Mammary epithelial cell (primary cell): ENCODE measurements at regions of chr10 and their contacts with region 1.

Region 1: GRCh38 chr10:70549962-70550458 is 52.5 kb downstream of the PRF1 start:
- DNase-seq: peak; percentile 39
- H3K4me3 ChIP-seq: no peak overlapping the region
- H3K27ac ChIP-seq: no peak overlapping the region
- H3K4me1 ChIP-seq: no peaks in the 10 kb centered on the region
- H3K27me3 ChIP-seq: peaks cover 2% of the 10 kb centered on the region
- CTCF ChIP-seq: peak; percentile 82 to 94

Region 2: DNA sequence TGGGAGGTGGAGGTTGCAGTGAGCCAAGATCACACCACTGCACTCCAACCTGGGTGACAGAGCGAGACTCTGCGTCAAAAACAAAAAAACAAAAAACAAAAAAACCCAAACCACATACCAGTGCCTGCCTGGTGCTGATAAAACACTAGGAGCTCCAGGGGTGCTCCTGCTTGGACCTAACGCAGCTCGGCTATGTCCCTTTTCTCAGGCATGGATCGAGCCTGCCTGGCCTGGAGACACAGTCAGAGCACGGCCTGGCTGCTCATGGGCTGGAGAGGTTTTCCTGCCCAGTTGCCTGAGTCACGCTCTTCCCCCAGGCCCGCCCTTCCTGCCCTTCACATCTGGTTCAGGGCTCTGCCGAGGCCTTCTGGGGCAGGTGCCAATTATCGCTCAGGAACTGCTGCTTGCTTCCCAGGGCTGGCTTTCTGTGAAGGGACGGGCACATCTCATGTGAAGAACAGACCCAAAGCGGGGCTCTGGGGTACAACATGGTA is 253.6 kb before region 1 on chr10:
- CTCF ChIA-PET with region 1: no interaction called
- dilution Hi-C with region 1: loop called (anchors 10 kb)
- in situ Hi-C with region 1: no loop called
- intact Hi-C with region 1: no loop called
- DNase-seq: peak; percentile 73
- H3K4me3 ChIP-seq: no peak overlapping the region
- H3K27ac ChIP-seq: no peak overlapping the region
- H3K4me1 ChIP-seq: peaks cover 15% of the 10 kb centered on the region
- H3K27me3 ChIP-seq: no peaks in the 10 kb centered on the region
- CTCF ChIP-seq: no peak

Region 3: DNA sequence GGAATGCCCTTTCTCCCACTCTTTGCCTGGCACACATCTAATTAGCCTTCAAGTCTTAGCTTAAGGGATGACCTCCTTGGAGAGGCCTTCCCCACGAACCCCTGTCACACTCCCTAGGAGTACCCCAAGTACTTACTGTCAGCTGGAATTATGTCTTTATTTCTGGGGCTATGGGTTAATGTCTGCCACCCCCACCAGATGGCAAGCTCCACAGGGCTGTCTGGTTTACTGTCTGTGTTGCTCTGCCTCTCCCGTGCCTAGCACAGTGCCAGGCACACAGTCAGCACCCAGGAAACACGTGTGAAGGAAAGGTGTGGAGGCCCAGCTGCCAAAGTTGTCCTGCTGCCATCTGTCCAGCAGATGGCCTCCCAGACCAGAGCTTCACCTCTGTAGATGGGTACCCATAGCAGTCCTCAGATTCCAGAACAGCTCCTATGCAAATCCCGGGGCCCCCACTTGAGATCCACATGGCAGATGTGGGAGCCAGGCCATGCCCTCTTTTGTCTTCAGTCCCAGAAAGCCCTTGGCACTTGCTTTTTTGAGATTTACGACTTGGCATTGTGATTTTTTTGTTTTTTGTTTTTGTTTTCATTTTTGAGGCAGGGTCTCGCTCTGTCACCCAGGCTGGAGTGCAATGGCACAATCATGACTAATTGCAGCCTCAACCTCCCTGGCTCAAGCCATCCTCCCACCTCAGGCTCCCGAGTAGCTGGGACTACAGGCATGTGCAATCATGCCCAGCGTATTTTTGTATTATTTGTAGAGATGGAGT is 88.6 kb before region 1 on chr10:
- CTCF ChIA-PET with region 1: no interaction called
- dilution Hi-C with region 1: loop called (anchors 10 kb)
- in situ Hi-C with region 1: no loop called
- intact Hi-C with region 1: no loop called
- DNase-seq: peak; percentile 48
- H3K4me3 ChIP-seq: no peak overlapping the region
- H3K27ac ChIP-seq: no peak overlapping the region
- H3K4me1 ChIP-seq: peaks cover 19% of the 10 kb centered on the region
- H3K27me3 ChIP-seq: peaks cover 3% of the 10 kb centered on the region
- CTCF ChIP-seq: peak; percentile 86 to 88

Region 4: GRCh38 chr10:70656489-70656888 is 106.5 kb after region 1 on chr10:
- CTCF ChIA-PET with region 1: interaction called, 3 read pairs
- dilution Hi-C with region 1: loop called (anchors 5 kb)
- in situ Hi-C with region 1: no loop called
- intact Hi-C with region 1: loop called (anchors 5 kb)
- DNase-seq: peak; percentile 99
- H3K4me3 ChIP-seq: no peak overlapping the region
- H3K27ac ChIP-seq: peak overlapping the region; percentile 82
- H3K4me1 ChIP-seq: peaks cover 39% of the 10 kb centered on the region
- H3K27me3 ChIP-seq: no peaks in the 10 kb centered on the region
- CTCF ChIP-seq: no peak

Region 5: GRCh38 chr10:70815504-70816219 is 265.7 kb after region 1 on chr10 and contains the start of gene SGPL1:
- CTCF ChIA-PET with region 1: no interaction called
- dilution Hi-C with region 1: no loop called
- in situ Hi-C with region 1: no loop called
- intact Hi-C with region 1: loop called (anchors 2 kb)
- DNase-seq: peak; percentile 81
- H3K4me3 ChIP-seq: peak within 1 kb of the TSS; percentile 63 to 71 (median 66)
- H3K27ac ChIP-seq: peak within 1 kb of the TSS; percentile 69
- H3K4me1 ChIP-seq: no peaks in the 10 kb centered on the region
- H3K27me3 ChIP-seq: no peaks in the 10 kb centered on the region
- CTCF ChIP-seq: peak; percentile 86 to 90
- total RNA-seq, gene SGPL1: 65.0 to 97.4 TPM

Region 6: DNA sequence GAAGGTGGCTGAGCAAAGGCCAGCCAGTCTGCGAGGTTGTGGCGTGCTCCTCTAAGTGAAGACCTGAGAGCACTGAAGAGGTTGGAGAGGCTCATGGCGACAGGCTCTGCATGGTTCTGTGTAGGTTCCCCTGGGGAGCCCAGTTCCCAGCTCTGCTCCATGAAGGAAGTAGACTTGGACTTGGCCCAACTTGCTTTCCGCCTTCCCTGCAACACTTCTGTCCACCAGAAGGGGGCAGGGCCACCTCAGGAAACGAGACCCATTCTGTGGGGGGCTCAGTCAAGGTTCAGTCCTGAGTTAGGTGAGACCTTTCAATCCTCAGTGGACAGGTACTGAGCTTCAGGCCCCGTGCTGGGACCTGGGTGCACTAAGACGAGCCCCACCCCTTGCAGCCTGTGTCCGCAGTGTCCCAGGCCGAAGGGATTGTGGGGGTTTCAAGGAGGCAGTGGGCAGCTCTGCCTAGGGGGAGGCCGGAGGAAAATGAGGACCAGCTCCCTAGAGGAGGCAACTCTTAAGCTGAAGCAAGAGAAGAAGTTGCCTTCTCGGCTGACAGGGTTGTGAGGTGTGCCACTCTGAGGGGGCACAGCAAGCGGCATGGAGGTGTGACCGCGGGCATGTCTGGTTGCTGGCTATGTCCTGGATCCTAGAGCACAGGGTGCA is 353.4 kb after region 1 on chr10:
- CTCF ChIA-PET with region 1: no interaction called
- dilution Hi-C with region 1: loop called (anchors 10 kb)
- in situ Hi-C with region 1: no loop called
- intact Hi-C with region 1: no loop called
- DNase-seq: peak; percentile 17
- H3K4me3 ChIP-seq: no peak overlapping the region
- H3K27ac ChIP-seq: no peak overlapping the region
- H3K4me1 ChIP-seq: no peaks in the 10 kb centered on the region
- H3K27me3 ChIP-seq: no peaks in the 10 kb centered on the region
- CTCF ChIP-seq: peak; percentile 81 to 92